Esophagus muscularis mucosa (tissue), 4 donors: ENCODE measurements at regions of chr6 and their contacts with region 1.

Region 1: GRCh38 chr6:27753668-27754407 is 158.4 kb downstream of the OR2B2 start:
- DNase-seq: no peak
- H3K4me3 ChIP-seq: peak overlapping the region; percentile 64 to 84 (median 74)
- H3K27ac ChIP-seq: peak overlapping the region in 1 of 4 donors; percentile 5
- H3K4me1 ChIP-seq: peaks cover 3 to 17% (median 14%) of the 10 kb centered on the region in 4 donors
- H3K27me3 ChIP-seq: peaks cover 0 to 33% (median 7%) of the 10 kb centered on the region in 4 donors
- CTCF ChIP-seq: no peak
- EP300 ChIP-seq: no peak
- POLR2A ChIP-seq: no peak

Region 2: GRCh38 chr6:27161946-27162603 is 591.8 kb before region 1 on chr6:
- intact Hi-C with region 1: loop called (anchors 5 kb)
- DNase-seq: no peak
- H3K4me3 ChIP-seq: no peak overlapping the region
- H3K27ac ChIP-seq: no peak overlapping the region
- H3K4me1 ChIP-seq: peaks cover 0 to 18% (median 10%) of the 10 kb centered on the region in 4 donors
- H3K27me3 ChIP-seq: peaks cover 0 to 11% (median 0%) of the 10 kb centered on the region in 4 donors
- CTCF ChIP-seq: peak; percentile 69 to 73 (median 69)
- EP300 ChIP-seq: no peak
- POLR2A ChIP-seq: no peak

Region 3: GRCh38 chr6:27188885-27189418 is 564.9 kb before region 1 on chr6:
- intact Hi-C with region 1: loop called (anchors 5 kb)
- DNase-seq: no peak
- H3K4me3 ChIP-seq: peak overlapping the region; percentile 57 to 70 (median 66)
- H3K27ac ChIP-seq: peak overlapping the region; percentile 76 to 82 (median 80)
- H3K4me1 ChIP-seq: peaks cover 0 to 9% (median 6%) of the 10 kb centered on the region in 4 donors
- H3K27me3 ChIP-seq: peaks cover 0 to 15% (median 0%) of the 10 kb centered on the region in 4 donors
- CTCF ChIP-seq: peak; percentile 77 to 79 (median 78)
- EP300 ChIP-seq: no peak
- POLR2A ChIP-seq: no peak

Region 4: GRCh38 chr6:27374824-27375612 is 378.8 kb before region 1 on chr6:
- intact Hi-C with region 1: loop called (anchors 10 kb)
- DNase-seq: peak; percentile 94
- H3K4me3 ChIP-seq: peak overlapping the region; percentile 56 to 84 (median 75)
- H3K27ac ChIP-seq: peak overlapping the region; percentile 4 to 57 (median 37)
- H3K4me1 ChIP-seq: peaks cover 3 to 19% (median 16%) of the 10 kb centered on the region in 4 donors
- H3K27me3 ChIP-seq: no peaks in the 10 kb centered on the region
- CTCF ChIP-seq: no peak
- EP300 ChIP-seq: no peak
- POLR2A ChIP-seq: no peak

Region 5: GRCh38 chr6:27518881-27519795 is 234.7 kb before region 1 on chr6:
- intact Hi-C with region 1: loop called (anchors 1 kb)
- DNase-seq: no peak
- H3K4me3 ChIP-seq: peak overlapping the region; percentile 62 to 84 (median 73)
- H3K27ac ChIP-seq: peak overlapping the region; percentile 81 to 93 (median 90)
- H3K4me1 ChIP-seq: peaks cover 7 to 15% (median 9%) of the 10 kb centered on the region in 4 donors
- H3K27me3 ChIP-seq: peaks cover 0 to 10% (median 0%) of the 10 kb centered on the region in 4 donors
- CTCF ChIP-seq: peak; percentile 62 to 76 (median 71)
- EP300 ChIP-seq: no peak
- POLR2A ChIP-seq: no peak

Region 6: GRCh38 chr6:27838058-27838944 is 84.5 kb after region 1 on chr6:
- intact Hi-C with region 1: loop called (anchors 2 kb)
- DNase-seq: peak; percentile 93
- H3K4me3 ChIP-seq: peak overlapping the region; percentile 69 to 90 (median 77)
- H3K27ac ChIP-seq: peak overlapping the region; percentile 89 to 96 (median 95)
- H3K4me1 ChIP-seq: peaks cover 18 to 30% (median 27%) of the 10 kb centered on the region in 4 donors
- H3K27me3 ChIP-seq: peaks cover 0 to 3% (median 0%) of the 10 kb centered on the region in 4 donors
- CTCF ChIP-seq: peak in 1 of 3 experiments; percentile 14
- EP300 ChIP-seq: no peak
- POLR2A ChIP-seq: peak; percentile 43